ENCODE measurements at regions of chr19 and their contacts with region 1.

Region 1: GRCh38 chr19:38142176-38143035 is 81.6 kb downstream of the DPF1 start:
- DNase-seq: no peak
- ATAC-seq: peak; percentile 57
- H3K4me3 ChIP-seq: no peak overlapping the region
- H3K27ac ChIP-seq: no peak overlapping the region
- H3K4me1 ChIP-seq: no peaks in the 10 kb centered on the region
- H3K27me3 ChIP-seq: no peaks in the 10 kb centered on the region

Region 2: DNA sequence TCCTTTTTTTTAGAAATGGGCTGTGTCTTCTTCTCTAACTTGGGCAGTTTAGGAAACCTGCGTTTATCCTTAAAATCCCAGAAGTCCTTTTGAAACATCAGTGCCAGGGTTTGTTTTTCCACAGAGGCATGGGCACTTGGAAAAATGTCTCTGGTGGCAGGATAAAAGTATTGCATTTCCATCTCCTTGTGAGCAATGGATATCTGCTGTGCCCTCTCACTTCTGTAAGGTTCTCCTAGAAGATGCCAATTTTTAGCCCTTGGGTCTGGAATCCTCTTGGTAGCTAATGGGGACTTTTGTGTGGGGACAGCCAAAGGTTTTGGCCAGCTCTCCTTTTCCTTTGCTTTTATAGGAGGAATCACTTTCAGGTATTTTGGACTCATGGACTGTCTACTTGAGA is 257.0 kb before region 1 on chr19:
- intact Hi-C with region 1: no loop called
- DNase-seq: no peak
- ATAC-seq: no peak
- H3K4me3 ChIP-seq: no peak overlapping the region
- H3K27ac ChIP-seq: no peak overlapping the region
- H3K4me1 ChIP-seq: no peaks in the 10 kb centered on the region
- H3K27me3 ChIP-seq: peaks cover 0 to 4% of the 10 kb centered on the region in 2 donors

Region 3: DNA sequence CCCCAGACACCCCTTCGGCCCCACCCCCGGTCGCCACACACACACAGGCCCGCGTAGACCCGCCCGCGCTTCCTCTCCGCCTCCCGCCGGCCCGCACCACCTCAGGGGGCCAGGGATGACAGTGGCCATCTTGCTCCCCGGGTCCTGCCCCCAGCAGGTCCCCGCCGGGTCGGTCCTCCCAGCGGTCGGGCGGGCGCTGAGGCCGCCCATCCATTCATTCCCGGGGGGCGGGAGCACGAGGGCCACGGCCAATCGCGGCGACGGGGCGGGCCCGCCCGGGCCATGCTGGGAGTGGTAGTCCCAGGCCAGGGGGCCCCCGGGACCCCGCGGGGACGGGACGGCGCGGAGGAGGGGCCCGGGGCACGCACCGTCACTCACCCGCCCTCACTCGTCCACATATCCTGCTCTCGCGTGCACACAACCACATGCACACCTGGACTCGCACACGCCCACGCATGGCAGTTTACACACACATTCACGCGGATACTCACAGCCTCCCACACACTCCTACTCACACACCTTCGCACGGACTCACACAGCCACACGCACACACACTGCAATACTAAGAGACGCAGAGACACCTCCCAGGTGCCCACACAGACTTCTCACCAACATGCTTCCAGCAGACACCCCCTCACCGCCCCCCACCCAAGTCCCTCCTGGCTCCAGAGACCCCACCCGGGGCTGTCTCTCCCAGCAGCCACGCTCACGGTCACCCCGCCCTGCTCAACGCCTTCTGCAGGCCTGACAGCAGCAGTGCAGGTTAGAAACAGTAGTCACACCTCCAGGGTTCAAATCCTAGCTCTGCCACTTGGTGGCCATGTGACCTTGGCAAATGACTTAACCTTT is 81.8 kb after region 1 on chr19 and contains the start of gene DPF1:
- intact Hi-C with region 1: loop called (anchors 5 to 10 kb)
- DNase-seq: no peak
- ATAC-seq: no peak
- H3K4me3 ChIP-seq: no peak within 1 kb of the TSS
- H3K27ac ChIP-seq: no peak within 1 kb of the TSS
- H3K4me1 ChIP-seq: no peaks in the 10 kb centered on the region
- H3K27me3 ChIP-seq: no peaks in the 10 kb centered on the region
- total RNA-seq, gene DPF1: 1.3 to 2.1 TPM

Region 4: GRCh38 chr19:38229585-38230073 is 87.2 kb after region 1 on chr19:
- intact Hi-C with region 1: loop called (anchors 5 to 10 kb)
- DNase-seq: peak; percentile 70 to 87
- ATAC-seq: peak; percentile 55
- H3K4me3 ChIP-seq: no peak overlapping the region
- H3K27ac ChIP-seq: no peak overlapping the region
- H3K4me1 ChIP-seq: no peaks in the 10 kb centered on the region
- H3K27me3 ChIP-seq: no peaks in the 10 kb centered on the region

Region 5: DNA sequence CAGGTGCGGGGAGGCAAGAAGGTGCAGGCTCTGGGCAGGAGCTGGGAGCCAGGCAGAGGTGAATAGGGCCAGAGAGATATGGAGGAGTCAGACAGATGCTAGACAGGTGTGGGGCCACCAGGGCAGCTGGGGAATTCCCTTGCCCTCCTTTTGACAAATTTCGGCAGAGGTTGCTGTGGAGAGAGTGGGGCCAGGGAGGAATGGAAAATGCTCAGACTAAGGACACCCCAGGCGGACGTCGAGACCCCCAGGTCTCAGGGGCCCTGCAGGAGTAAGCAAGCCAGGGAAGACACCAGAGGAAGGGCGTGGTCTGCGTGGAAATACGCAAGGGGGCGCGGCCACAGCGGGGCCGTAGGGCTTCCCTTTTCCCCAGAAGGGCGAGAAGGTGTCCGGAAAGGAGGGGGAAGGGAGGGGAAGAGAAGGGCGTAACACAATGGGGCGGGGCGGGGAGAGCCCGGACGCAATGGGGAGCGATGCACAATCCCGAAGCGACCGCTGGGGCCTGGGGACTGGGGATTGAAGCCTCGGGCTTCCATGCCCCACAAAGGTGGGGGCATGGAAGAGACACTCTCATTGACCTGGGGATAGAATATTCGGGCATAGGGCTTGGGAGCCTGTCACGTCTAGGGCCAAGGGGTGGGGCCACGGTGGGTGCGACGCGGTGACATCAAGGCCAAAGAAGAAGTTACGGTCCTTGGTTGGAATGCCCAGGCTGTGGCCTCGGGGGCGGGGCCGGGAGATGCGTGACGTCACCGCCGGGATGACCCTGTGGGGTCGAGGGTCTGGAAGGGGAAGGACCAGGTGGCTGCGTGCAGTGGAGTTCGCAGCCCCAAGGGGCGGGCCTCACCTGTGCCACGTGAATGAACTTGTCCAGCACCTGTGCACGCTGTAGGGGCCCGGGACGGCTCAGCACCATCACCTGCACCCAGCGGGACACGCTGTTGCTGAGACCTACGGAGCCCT is 275.4 kb after region 1 on chr19:
- intact Hi-C with region 1: no loop called
- DNase-seq: peak; percentile 81 to 86
- ATAC-seq: peak; percentile 64
- H3K4me3 ChIP-seq: no peak overlapping the region
- H3K27ac ChIP-seq: no peak overlapping the region
- H3K4me1 ChIP-seq: no peaks in the 10 kb centered on the region
- H3K27me3 ChIP-seq: no peaks in the 10 kb centered on the region

Region 6: DNA sequence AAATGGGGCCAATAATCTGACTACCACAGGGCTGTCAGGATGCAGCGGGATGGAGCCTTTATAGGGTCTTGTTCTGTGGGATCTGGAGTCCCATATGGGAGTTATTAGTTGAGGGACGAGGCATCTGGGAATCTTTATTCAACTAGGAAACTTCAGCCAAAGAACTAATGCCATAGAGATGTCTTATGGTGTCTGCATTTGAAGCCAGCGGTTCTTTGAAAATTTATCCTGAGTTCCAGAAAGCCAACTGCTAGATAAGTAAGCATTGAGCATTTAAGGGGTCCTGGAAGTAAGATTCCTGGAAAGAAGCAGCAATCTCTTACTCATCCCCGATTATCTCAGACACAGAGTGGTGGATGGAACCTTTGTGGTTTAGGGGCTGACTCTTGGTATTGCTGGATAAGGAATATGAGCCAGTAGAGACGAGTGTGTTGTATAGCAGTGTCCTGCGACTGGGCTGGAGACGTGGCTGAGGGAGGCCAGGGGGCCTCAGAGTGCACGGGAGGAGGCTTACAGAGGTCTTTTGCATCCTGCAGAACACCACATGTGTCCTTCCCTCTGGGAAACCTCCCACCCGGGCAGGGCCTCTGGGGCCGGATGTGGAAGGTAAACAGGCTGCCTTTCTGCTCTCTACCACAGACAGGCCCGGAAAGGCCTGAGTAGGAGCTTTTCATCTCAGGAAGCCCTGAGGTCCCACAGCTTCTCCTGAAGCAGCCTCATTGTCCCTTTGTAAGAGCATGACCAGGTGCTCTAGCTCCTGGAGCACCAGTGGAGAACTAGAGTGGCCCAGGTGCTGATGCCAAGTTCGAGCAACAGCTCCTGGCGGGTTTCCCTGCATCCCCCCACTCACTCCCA is 533.8 kb after region 1 on chr19:
- intact Hi-C with region 1: no loop called
- DNase-seq: peak in 1 of 2 donors; percentile 49
- ATAC-seq: peak; percentile 28
- H3K4me3 ChIP-seq: no peak overlapping the region
- H3K27ac ChIP-seq: peak overlapping the region; percentile 47 to 99
- H3K4me1 ChIP-seq: peaks cover 0 to 11% of the 10 kb centered on the region in 2 donors
- H3K27me3 ChIP-seq: no peaks in the 10 kb centered on the region

Measured in aorta (tissue), 5 donors.